Sigmoid colon (tissue), 7 donors: ENCODE measurements at regions of chr3 and their contacts with region 1.

Region 1: GRCh38 chr3:43540624-43541023 is 81.2 kb downstream of the ANO10 start:
- DNase-seq: no peak
- H3K4me3 ChIP-seq: no peak overlapping the region
- H3K27ac ChIP-seq: no peak overlapping the region
- H3K4me1 ChIP-seq: no peaks in the 10 kb centered on the region
- H3K27me3 ChIP-seq: no peaks in the 10 kb centered on the region
- CTCF ChIP-seq: no peak
- EP300 ChIP-seq: no peak
- POLR2A ChIP-seq: no peak

Region 2: GRCh38 chr3:43477600-43477999 is 63.0 kb before region 1 on chr3:
- intact Hi-C with region 1: no loop called
- DNase-seq: no peak
- H3K4me3 ChIP-seq: no peak overlapping the region
- H3K27ac ChIP-seq: peak overlapping the region in 1 of 4 donors; percentile 16
- H3K4me1 ChIP-seq: no peaks in the 10 kb centered on the region
- H3K27me3 ChIP-seq: no peaks in the 10 kb centered on the region
- CTCF ChIP-seq: no peak
- EP300 ChIP-seq: no peak
- POLR2A ChIP-seq: no peak

Region 3: GRCh38 chr3:43690400-43691119 is 149.9 kb after region 1 on chr3 and contains the start of gene ABHD5:
- intact Hi-C with region 1: loop called (anchors 5 kb)
- DNase-seq: peak; percentile 93
- H3K4me3 ChIP-seq: peak within 1 kb of the TSS; percentile 63 to 93 (median 88)
- H3K27ac ChIP-seq: peak within 1 kb of the TSS; percentile 89 to 94 (median 92)
- H3K4me1 ChIP-seq: peaks cover 0 to 31% (median 19%) of the 10 kb centered on the region in 4 donors
- H3K27me3 ChIP-seq: no peaks in the 10 kb centered on the region
- CTCF ChIP-seq: no peak
- EP300 ChIP-seq: no peak
- POLR2A ChIP-seq: peak; percentile 95 to 96
- total RNA-seq, gene ABHD5: 11.1 to 24.7 (median 22.3) TPM

Region 4: GRCh38 chr3:44198284-44199269 is 658.0 kb after region 1 on chr3:
- intact Hi-C with region 1: loop called (anchors 2 kb)
- DNase-seq: no peak
- H3K4me3 ChIP-seq: no peak overlapping the region
- H3K27ac ChIP-seq: no peak overlapping the region
- H3K4me1 ChIP-seq: no peaks in the 10 kb centered on the region
- H3K27me3 ChIP-seq: no peaks in the 10 kb centered on the region
- CTCF ChIP-seq: peak; percentile 26 to 75 (median 54)
- EP300 ChIP-seq: no peak
- POLR2A ChIP-seq: no peak